ENCODE measurements at regions of chr2 and their contacts with region 1.

Region 1: DNA sequence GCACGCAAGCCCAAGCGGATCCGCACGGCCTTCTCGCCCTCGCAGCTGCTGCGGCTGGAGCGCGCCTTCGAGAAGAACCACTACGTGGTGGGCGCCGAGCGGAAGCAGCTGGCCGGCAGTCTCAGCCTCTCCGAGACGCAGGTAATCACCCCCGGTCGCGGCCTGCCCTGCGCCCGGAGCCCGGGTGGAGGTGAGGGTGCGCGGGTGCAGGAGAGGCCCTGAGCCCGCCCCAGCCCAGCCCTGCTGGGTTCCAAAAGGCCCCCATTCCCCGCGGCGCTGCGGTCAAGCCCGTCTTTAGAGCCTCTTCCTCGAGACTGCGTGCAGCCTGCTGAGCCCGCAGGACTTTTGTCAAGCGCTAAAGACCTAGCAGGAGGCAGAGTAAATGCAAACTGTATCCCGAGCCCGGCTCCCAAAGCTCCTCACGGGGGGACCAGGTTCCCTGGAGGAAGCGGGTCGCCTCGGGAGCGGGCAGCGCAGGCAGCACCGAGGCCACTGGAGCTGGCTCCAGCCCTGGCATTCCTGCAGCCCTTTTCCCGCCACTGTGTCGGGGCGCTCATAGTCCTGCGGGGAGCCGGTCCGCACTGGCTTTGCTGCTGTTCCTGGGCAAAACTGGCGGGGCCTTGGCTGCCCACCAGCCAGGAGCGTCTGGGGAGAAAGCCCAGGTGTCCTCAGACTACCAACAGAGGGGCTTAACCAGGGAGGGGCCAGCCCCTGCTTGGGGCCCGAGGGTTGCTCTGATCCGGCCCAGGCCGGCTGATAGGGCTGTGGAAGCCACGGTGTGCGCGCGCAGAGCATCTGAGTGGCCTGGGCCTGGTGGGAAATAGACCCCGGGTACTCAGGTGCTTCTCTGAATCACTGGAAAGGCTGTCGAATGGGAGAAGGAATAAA is 7.3 kb downstream of the EMX1 start:
- DNase-seq: peak; percentile 60
- H3K4me3 ChIP-seq: no peak overlapping the region
- H3K27ac ChIP-seq: no peak overlapping the region
- H3K4me1 ChIP-seq: peaks cover 3 to 7% of the 10 kb centered on the region in 2 experiments; a peak in 2 of 4 replicates
- H3K27me3 ChIP-seq: peaks cover 98% of the 10 kb centered on the region
- CTCF ChIP-seq: no peak
- EP300 ChIP-seq: no peak
- RAD21 ChIP-seq: no peak

Region 2: GRCh38 chr2:73063909-73064875 is 139.6 kb after region 1 on chr2:
- CTCF ChIA-PET with region 1: no interaction called
- POLR2A ChIA-PET with region 1: no interaction called
- DNase-seq: no peak
- H3K4me3 ChIP-seq: no peak overlapping the region
- H3K27ac ChIP-seq: peak overlapping the region; percentile 54 to 83
- H3K4me1 ChIP-seq: peaks cover 4 to 24% of the 10 kb centered on the region in 2 experiments; a peak in 3 of 4 replicates
- H3K27me3 ChIP-seq: no peaks in the 10 kb centered on the region
- CTCF ChIP-seq: no peak
- EP300 ChIP-seq: 0 out of 4 replicates have a peak, but pooled peaks of 1 of the 2 experiments have one; percentile 39
- RAD21 ChIP-seq: no peak

Region 3: DNA sequence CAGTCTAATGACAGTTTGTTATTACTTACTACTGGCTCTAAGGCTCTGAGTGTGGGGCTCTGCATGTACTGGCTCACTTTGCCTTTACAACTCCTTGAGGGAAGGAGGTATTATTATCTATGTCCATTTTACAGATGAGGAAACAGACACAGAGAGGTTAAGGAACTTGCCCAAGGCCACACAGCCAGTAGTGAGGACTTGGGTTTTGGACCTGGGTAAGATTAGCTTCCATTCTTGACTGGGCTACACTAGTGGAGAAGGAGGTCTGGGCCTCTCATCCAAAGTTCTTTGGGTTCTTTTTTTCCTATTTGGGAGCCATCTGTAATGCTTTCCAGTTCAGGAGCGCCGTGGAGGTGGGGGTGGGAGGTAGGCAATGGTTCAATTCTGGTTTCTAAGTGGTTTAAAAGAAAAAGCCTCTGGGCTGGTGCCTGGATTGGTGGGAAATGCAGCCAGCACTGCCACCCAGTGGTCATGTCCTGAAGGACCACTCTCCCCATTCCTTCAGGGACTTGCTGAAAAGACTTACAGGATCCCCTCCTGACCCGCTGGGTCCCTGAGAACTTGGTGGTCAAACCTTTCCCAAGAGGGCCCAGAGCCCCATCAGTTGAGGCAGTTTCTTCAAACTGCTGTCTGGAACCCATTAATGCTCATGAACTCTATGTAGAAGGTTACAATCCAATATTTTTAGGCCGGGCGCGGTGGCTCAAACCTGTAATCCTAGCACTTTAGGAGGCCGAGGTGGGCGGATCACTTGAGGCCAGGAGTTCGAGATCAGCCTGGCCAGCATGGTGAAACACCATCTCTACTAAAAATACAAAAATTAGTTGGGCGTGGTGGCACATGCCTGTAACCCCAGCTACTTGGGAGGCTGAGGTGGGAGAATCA is 239.1 kb after region 1 on chr2:
- CTCF ChIA-PET with region 1: interaction called, 10 read pairs
- POLR2A ChIA-PET with region 1: no interaction called
- DNase-seq: peak; percentile 88
- H3K4me3 ChIP-seq: no peak overlapping the region; a peak in 1 of 4 replicates
- H3K27ac ChIP-seq: no peak overlapping the region
- H3K4me1 ChIP-seq: no peaks in the 10 kb centered on the region
- H3K27me3 ChIP-seq: no peaks in the 10 kb centered on the region
- CTCF ChIP-seq: peak; percentile 87
- EP300 ChIP-seq: no peak
- RAD21 ChIP-seq: peak; percentile 90

Region 4: DNA sequence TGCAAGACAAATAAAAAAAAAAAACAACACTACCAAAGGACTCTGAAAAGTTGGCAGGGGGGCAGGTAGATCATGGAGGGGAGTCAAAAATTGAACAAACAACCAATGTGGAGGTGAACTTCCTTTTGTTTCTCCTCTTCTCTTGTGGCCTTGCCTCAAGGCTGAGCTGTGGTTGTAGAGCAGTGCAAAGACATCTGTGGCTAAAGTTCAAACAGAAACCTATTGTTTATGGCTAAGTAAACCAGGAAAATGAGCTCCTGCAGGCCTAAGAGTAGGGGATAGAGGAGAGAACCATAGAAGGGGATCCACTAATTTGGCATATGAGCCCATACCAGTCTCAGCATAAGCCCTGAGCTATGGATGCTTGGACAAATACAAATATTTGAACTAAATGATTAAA is 409.0 kb after region 1 on chr2:
- CTCF ChIA-PET with region 1: no interaction called
- POLR2A ChIA-PET with region 1: no interaction called
- DNase-seq: no peak
- H3K4me3 ChIP-seq: no peak overlapping the region
- H3K27ac ChIP-seq: no peak overlapping the region
- H3K4me1 ChIP-seq: no peaks in the 10 kb centered on the region
- H3K27me3 ChIP-seq: no peaks in the 10 kb centered on the region
- CTCF ChIP-seq: no peak
- EP300 ChIP-seq: no peak
- RAD21 ChIP-seq: no peak